ENCODE measurements at regions of chr18 and their contacts with region 1.

Region 1: DNA sequence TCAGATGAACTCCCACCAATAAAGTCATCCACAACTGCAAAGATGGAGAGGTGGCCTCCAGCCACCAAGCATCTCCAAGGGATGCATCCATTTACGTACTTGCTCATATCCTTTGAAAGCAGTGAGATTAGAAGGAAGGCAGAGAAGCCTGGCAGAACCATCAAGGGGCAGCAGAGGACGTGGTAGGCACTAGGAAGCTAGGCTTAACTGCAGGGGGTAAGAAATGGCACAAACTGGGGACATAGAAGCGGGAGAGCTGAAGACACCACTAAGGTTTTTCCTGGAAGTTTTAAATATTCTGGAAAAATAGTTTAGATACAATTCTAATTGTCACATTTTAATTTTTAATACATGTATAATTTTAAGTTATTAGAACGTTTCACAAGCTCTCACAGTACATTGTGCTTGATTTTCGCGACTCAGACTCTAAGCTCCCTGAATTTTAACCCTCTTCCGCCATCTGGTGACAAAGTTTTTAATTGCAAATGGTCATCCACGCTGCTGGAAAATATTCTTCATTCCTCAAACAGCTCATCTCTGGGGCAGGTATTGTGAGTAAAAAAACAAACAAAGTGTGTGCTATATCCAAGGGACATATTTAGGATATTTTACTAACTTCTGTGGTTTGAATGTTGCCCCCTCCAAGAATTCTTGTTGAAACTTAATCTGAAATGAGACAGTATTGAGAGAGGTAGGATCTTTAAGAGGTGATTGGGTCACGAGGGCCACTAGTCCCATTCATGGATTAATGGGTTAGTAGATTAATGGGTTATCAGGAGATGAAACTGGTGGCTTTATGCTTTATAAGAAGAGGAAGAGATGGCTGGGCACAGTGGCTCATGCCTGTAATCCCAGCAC is 1.6 kb upstream of the PSTPIP2 start:
- DNase-seq: peak in 8 of 9 experiments; percentile 27 to 79 (median 56)
- ATAC-seq: peak; percentile 66
- H3K4me3 ChIP-seq: no peak overlapping the region
- H3K4me3 Mint-ChIP-seq: peak overlapping the region; percentile 86
- H3K27ac ChIP-seq: no peak overlapping the region
- H3K27ac Mint-ChIP-seq: no peak overlapping the region
- H3K4me1 ChIP-seq: peaks cover 21% of the 10 kb centered on the region
- H3K4me1 Mint-ChIP-seq: peaks cover 40% of the 10 kb centered on the region
- H3K27me3 ChIP-seq: no peaks in the 10 kb centered on the region
- H3K27me3 Mint-ChIP-seq: no peaks in the 10 kb centered on the region
- CTCF ChIP-seq: peak; percentile 89

Region 2: GRCh38 chr18:45621061-45621511 is 452.6 kb before region 1 on chr18:
- CTCF ChIA-PET with region 1: interaction called, 8 read pairs
- POLR2A ChIA-PET with region 1: no interaction called
- intact Hi-C with region 1: loop called (anchors 1 kb)
- DNase-seq: peak in 7 of 9 experiments; percentile 10 to 66 (median 39)
- ATAC-seq: peak; percentile 56
- H3K4me3 ChIP-seq: no peak overlapping the region
- H3K4me3 Mint-ChIP-seq: no peak overlapping the region
- H3K27ac ChIP-seq: no peak overlapping the region
- H3K27ac Mint-ChIP-seq: no peak overlapping the region
- H3K4me1 ChIP-seq: no peaks in the 10 kb centered on the region
- H3K4me1 Mint-ChIP-seq: no peaks in the 10 kb centered on the region
- H3K27me3 ChIP-seq: no peaks in the 10 kb centered on the region
- H3K27me3 Mint-ChIP-seq: peaks cover 16% of the 10 kb centered on the region
- CTCF ChIP-seq: peak; percentile 92

Region 3: GRCh38 chr18:45722899-45723298 is 350.8 kb before region 1 on chr18:
- CTCF ChIA-PET with region 1: interaction called, 6 read pairs
- POLR2A ChIA-PET with region 1: no interaction called
- intact Hi-C with region 1: loop called in 1 of 2 experiments (anchors 1 kb)
- DNase-seq: peak; percentile 33 to 77 (median 58)
- ATAC-seq: peak; percentile 73
- H3K4me3 ChIP-seq: no peak overlapping the region
- H3K4me3 Mint-ChIP-seq: no peak overlapping the region
- H3K27ac ChIP-seq: no peak overlapping the region
- H3K27ac Mint-ChIP-seq: no peak overlapping the region
- H3K4me1 ChIP-seq: no peaks in the 10 kb centered on the region
- H3K4me1 Mint-ChIP-seq: no peaks in the 10 kb centered on the region
- H3K27me3 ChIP-seq: no peaks in the 10 kb centered on the region
- H3K27me3 Mint-ChIP-seq: peaks cover 2% of the 10 kb centered on the region
- CTCF ChIP-seq: peak; percentile 67

Region 4: GRCh38 chr18:45839414-45840395 is 234.0 kb before region 1 on chr18:
- CTCF ChIA-PET with region 1: no interaction called
- POLR2A ChIA-PET with region 1: no interaction called
- intact Hi-C with region 1: no loop called
- DNase-seq: peak in 3 of 9 experiments; percentile 49 to 56 (median 50)
- ATAC-seq: peak; percentile 72
- H3K4me3 ChIP-seq: no peak overlapping the region
- H3K4me3 Mint-ChIP-seq: no peak overlapping the region
- H3K27ac ChIP-seq: no peak overlapping the region
- H3K27ac Mint-ChIP-seq: no peak overlapping the region
- H3K4me1 ChIP-seq: peaks cover 8% of the 10 kb centered on the region
- H3K4me1 Mint-ChIP-seq: peaks cover 17% of the 10 kb centered on the region
- H3K27me3 ChIP-seq: peaks cover 0 to 11% of the 10 kb centered on the region in 2 experiments
- H3K27me3 Mint-ChIP-seq: peaks cover 36% of the 10 kb centered on the region
- CTCF ChIP-seq: no peak

Region 5: GRCh38 chr18:45920367-45920766 is 153.3 kb before region 1 on chr18:
- CTCF ChIA-PET with region 1: interaction called, 28 read pairs
- POLR2A ChIA-PET with region 1: no interaction called
- intact Hi-C with region 1: loop called in 1 of 2 experiments (anchors 1 kb)
- DNase-seq: peak in 2 of 9 experiments; percentile 26 to 31
- ATAC-seq: no peak
- H3K4me3 ChIP-seq: no peak overlapping the region
- H3K4me3 Mint-ChIP-seq: no peak overlapping the region
- H3K27ac ChIP-seq: no peak overlapping the region
- H3K27ac Mint-ChIP-seq: no peak overlapping the region
- H3K4me1 ChIP-seq: peaks cover 6% of the 10 kb centered on the region
- H3K4me1 Mint-ChIP-seq: peaks cover 16% of the 10 kb centered on the region
- H3K27me3 ChIP-seq: no peaks in the 10 kb centered on the region
- H3K27me3 Mint-ChIP-seq: no peaks in the 10 kb centered on the region
- CTCF ChIP-seq: no peak

Region 6: DNA sequence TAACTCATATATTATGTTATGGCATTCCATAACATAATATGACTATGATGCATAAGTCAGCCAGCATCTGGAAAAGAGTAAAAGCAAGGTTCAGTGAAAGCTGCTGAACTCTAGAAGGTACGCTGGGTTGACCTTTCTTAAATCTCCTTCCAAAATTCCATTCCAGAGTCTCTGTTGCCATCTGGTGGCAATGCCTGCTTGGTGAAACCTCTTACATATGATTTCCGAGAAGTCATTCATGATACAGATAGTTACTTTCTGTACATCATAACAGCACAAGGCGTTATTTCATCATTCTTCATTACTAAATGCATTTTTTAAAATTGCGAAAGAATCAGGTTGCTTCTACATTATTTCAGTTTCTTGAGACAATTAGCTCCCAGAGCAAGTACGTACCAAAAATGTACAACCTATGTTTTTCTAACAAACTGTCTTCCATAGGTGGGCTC is 99.6 kb before region 1 on chr18:
- CTCF ChIA-PET with region 1: interaction called, 26 read pairs
- POLR2A ChIA-PET with region 1: no interaction called
- intact Hi-C with region 1: loop called (anchors 1 kb)
- DNase-seq: peak; percentile 39 to 81 (median 63)
- ATAC-seq: peak; percentile 83
- H3K4me3 ChIP-seq: no peak overlapping the region
- H3K4me3 Mint-ChIP-seq: no peak overlapping the region
- H3K27ac ChIP-seq: no peak overlapping the region
- H3K27ac Mint-ChIP-seq: no peak overlapping the region
- H3K4me1 ChIP-seq: peaks cover 7% of the 10 kb centered on the region
- H3K4me1 Mint-ChIP-seq: peaks cover 6% of the 10 kb centered on the region
- H3K27me3 ChIP-seq: no peaks in the 10 kb centered on the region
- H3K27me3 Mint-ChIP-seq: no peaks in the 10 kb centered on the region
- CTCF ChIP-seq: peak; percentile 86

Region 7: DNA sequence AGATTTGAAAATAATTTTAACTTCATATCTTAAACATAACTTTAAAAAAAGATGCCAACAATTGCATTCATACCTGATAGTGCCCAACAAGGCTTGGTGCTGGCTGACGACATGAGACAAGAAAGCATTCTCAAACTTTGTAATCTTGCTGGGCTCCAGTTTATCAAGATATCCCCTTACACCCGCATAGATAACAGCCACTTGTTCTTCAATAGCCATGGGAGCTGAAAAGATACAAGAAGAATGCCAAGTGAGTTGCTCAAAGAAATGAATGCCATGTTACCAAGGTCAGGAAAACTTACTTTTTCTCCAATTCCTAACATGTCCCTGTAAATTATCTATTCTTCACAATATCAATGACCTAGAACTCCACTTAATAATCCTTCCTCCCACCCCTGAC is 10.7 kb after region 1 on chr18:
- CTCF ChIA-PET with region 1: interaction called, 20 read pairs
- POLR2A ChIA-PET with region 1: no interaction called
- intact Hi-C with region 1: no loop called
- DNase-seq: no peak
- ATAC-seq: no peak
- H3K4me3 ChIP-seq: no peak overlapping the region
- H3K4me3 Mint-ChIP-seq: no peak overlapping the region
- H3K27ac ChIP-seq: no peak overlapping the region
- H3K27ac Mint-ChIP-seq: peak overlapping the region; percentile 18
- H3K4me1 ChIP-seq: no peaks in the 10 kb centered on the region
- H3K4me1 Mint-ChIP-seq: peaks cover 5% of the 10 kb centered on the region
- H3K27me3 ChIP-seq: no peaks in the 10 kb centered on the region
- H3K27me3 Mint-ChIP-seq: no peaks in the 10 kb centered on the region
- CTCF ChIP-seq: no peak

Region 8: GRCh38 chr18:46445914-46446313 is 372.2 kb after region 1 on chr18:
- CTCF ChIA-PET with region 1: no interaction called
- POLR2A ChIA-PET with region 1: no interaction called
- intact Hi-C with region 1: no loop called
- DNase-seq: no peak
- ATAC-seq: no peak
- H3K4me3 ChIP-seq: no peak overlapping the region
- H3K4me3 Mint-ChIP-seq: no peak overlapping the region
- H3K27ac ChIP-seq: no peak overlapping the region
- H3K27ac Mint-ChIP-seq: no peak overlapping the region
- H3K4me1 ChIP-seq: no peaks in the 10 kb centered on the region
- H3K4me1 Mint-ChIP-seq: no peaks in the 10 kb centered on the region
- H3K27me3 ChIP-seq: no peaks in the 10 kb centered on the region
- H3K27me3 Mint-ChIP-seq: peaks cover 7% of the 10 kb centered on the region
- CTCF ChIP-seq: no peak